PC-9 (cell line): ENCODE measurements at regions of chr15 and their contacts with region 1.

Region 1: DNA sequence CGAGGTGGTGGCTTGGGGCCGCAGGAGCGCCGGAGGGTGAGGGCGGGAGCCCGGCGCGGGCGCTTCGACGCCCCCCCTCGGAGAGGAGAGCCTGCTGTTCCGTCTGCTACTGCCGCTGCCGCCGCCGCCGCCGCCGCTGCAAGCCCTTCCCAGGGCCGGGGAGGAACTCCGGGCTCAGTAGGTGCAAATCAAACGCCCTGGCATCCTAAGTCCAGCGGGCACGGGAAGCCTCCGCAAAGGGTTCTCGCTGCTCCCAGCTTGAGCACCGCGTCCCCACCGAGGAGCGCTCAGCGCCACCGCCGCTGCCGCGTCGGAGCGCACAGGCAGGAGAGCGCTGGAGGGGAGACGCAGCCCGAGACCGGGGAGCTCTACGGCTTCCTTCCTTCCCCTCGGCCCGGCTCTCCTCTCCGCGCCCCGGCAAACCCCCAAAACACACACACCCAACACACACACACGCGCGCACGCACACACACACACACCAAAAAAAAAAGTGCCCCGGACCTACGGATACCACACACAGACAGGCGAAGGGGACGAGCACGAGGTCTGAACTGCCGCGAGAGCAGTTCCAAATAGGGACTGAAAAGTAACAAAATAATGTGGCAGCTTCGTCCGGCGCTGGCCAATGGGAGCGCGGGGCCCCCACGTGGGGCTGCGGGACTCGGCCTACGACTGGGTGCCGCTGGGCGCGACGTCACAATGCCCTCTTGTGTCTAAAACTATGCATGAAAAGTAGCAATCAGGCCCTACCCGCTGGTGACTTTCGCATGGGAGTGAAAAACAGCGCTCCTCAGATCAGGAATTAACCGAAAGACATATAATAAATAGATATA is at the start of gene TLE3:
- DNase-seq: peak; percentile 91 to 97
- H3K4me3 ChIP-seq: peak within 1 kb of the TSS; percentile 84
- H3K27ac ChIP-seq: peak within 1 kb of the TSS; percentile 78
- H3K4me1 ChIP-seq: peaks cover 48% of the 10 kb centered on the region
- H3K27me3 ChIP-seq: no peaks in the 10 kb centered on the region
- CTCF ChIP-seq: peak; percentile 55; the same call in 1 of the 2 replicates
- total RNA-seq, gene TLE3: 51.3 and 72.4 TPM in 2 replicates

Region 2: DNA sequence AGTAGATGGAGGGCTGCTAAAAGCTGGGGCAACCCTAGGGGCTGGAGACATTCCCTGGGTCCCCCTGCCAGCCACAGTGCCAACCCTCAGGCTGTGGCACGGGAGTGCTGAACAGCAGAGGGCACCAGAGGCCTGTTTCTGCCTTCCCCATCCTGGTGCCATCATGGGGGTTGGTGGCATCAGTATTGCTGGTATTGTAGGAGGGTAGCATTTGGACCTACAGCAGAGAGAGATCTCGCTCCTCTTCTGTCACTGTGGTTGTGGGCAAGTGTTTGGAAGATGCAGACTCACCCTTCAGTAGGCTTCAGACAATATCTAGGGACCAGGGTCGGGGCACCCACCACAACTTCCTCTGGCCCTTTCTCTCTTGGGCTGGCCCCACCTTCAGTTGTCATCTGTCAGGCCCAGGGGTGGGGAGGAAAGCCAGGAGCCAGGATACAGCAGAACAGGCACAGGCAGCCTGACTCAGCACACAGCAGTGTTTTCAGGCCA is 521.5 kb before region 1 on chr15:
- CTCF ChIA-PET with region 1: interaction called, 13 read pairs
- POLR2A ChIA-PET with region 1: no interaction called
- intact Hi-C with region 1: loop called (anchors 1 kb)
- DNase-seq: peak in 1 of 2 experiments; percentile 71
- H3K4me3 ChIP-seq: no peak overlapping the region
- H3K27ac ChIP-seq: no peak overlapping the region
- H3K4me1 ChIP-seq: peaks cover 60% of the 10 kb centered on the region
- H3K27me3 ChIP-seq: no peaks in the 10 kb centered on the region
- CTCF ChIP-seq: peak; percentile 76

Region 3: DNA sequence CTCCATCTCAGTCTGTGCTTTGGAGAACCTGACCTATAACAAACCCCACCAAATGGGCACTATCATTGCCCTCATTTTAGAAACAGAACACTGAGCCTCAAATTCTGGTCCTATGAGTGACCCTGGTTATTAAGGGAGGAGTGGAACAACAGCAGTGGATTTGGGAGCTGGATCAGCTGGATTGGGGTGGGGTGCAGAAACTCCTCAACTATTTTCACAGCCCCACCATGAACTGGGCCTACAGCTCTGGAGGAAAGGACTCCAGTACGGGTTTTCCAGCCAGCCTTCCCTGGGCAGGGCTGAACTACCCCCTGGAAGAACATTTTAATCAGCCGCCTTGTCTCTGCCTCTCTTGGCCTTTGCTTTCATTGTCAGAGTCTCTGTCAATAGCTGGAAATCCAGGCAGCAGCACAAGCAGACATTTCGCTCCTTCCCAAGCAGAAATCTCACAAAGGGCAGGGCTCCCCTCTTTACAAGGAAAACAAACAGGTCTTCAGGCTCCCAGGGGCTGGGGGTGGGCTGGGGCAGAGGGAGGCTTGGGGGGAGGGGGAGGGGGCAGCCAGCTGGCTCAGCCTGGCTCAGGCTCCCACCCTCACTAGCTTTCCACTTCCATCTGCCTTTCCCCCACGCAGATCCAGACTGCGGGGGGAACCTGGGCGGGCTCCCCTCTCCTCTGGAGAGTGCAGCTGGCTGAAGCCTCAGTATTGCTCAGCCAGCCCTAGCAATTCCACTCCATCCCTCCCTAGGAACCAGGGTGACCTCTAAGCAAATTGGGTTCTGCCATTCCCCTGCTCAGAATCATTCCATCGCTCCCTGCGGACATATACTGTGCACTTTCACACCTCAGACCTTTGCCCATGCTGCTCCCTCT is 13.9 kb after region 1 on chr15:
- CTCF ChIA-PET with region 1: interaction called, 4 read pairs
- POLR2A ChIA-PET with region 1: no interaction called
- intact Hi-C with region 1: loop called (anchors 1 kb)
- DNase-seq: peak; percentile 51 to 70
- H3K4me3 ChIP-seq: no peak overlapping the region
- H3K27ac ChIP-seq: no peak overlapping the region
- H3K4me1 ChIP-seq: peaks cover 9% of the 10 kb centered on the region
- H3K27me3 ChIP-seq: no peaks in the 10 kb centered on the region
- CTCF ChIP-seq: no peak

Region 4: GRCh38 chr15:70245932-70246331 is 148.4 kb after region 1 on chr15:
- CTCF ChIA-PET with region 1: no interaction called
- POLR2A ChIA-PET with region 1: no interaction called
- intact Hi-C with region 1: loop called (anchors 2 kb)
- DNase-seq: peak; percentile 72 to 74
- H3K4me3 ChIP-seq: no peak overlapping the region
- H3K27ac ChIP-seq: peak overlapping the region; percentile 72
- H3K4me1 ChIP-seq: peaks cover 51% of the 10 kb centered on the region
- H3K27me3 ChIP-seq: no peaks in the 10 kb centered on the region
- CTCF ChIP-seq: no peak

Region 5: GRCh38 chr15:70466895-70467529 is 369.5 kb after region 1 on chr15:
- CTCF ChIA-PET with region 1: interaction called, 10 read pairs
- POLR2A ChIA-PET with region 1: no interaction called
- intact Hi-C with region 1: loop called (anchors 2 kb)
- DNase-seq: peak; percentile 42 to 49
- H3K4me3 ChIP-seq: no peak overlapping the region
- H3K27ac ChIP-seq: no peak overlapping the region
- H3K4me1 ChIP-seq: peaks cover 63% of the 10 kb centered on the region
- H3K27me3 ChIP-seq: no peaks in the 10 kb centered on the region
- CTCF ChIP-seq: peak; percentile 70

Region 6: DNA sequence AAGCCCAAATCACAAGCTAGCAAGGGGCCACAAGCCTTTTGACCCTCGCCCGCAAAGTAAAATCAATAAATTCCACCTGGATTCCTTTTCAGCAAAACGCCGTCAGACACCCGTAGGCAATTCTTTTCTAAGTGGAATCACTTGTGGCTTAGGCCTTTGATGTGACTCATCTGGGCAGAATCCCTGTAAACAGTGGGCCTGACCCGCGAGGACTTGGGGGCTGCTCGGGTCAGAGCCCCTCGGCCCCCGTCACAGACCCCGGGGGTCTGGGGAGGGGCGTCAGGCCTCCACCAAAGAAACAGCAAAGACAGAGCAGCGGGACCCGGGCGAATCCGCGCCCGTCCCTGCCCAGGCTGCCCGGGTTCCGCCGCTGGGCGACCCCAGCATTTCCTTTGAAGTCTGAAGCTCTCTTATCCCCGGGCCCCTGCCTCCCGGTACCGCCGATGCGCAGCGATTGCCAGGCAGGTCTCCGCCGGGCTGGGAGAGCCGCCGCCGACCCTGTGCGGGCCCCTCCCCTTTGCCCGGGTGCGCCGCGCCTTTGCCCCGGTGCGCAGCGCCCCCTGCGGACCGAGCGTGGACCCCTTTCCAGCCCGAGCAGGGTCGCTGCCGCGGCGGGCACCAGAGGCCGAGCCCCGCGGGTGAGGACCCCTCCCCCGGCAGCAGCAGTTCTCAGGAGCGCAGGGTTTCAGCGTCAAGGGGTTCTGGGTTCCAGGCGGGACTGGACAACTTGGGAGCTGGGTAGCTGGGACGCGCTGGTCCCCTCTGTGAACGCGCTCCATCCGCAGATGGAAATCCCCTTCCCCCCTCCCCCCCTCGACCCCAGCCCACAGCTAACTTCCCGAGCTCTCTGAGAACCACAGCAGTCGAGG is 487.5 kb after region 1 on chr15:
- CTCF ChIA-PET with region 1: no interaction called
- POLR2A ChIA-PET with region 1: interaction called, 3 read pairs
- intact Hi-C with region 1: loop called (anchors 10 kb)
- DNase-seq: peak; percentile 71 to 86
- H3K4me3 ChIP-seq: peak overlapping the region; percentile 46; the same call in 1 of the 2 replicates
- H3K27ac ChIP-seq: peak overlapping the region; percentile 81
- H3K4me1 ChIP-seq: peaks cover 18% of the 10 kb centered on the region
- H3K27me3 ChIP-seq: no peaks in the 10 kb centered on the region
- CTCF ChIP-seq: peak; percentile 74